Heart right ventricle (tissue), 16 donors: ENCODE measurements at regions of chr5 and their contacts with region 1.

Region 1: DNA sequence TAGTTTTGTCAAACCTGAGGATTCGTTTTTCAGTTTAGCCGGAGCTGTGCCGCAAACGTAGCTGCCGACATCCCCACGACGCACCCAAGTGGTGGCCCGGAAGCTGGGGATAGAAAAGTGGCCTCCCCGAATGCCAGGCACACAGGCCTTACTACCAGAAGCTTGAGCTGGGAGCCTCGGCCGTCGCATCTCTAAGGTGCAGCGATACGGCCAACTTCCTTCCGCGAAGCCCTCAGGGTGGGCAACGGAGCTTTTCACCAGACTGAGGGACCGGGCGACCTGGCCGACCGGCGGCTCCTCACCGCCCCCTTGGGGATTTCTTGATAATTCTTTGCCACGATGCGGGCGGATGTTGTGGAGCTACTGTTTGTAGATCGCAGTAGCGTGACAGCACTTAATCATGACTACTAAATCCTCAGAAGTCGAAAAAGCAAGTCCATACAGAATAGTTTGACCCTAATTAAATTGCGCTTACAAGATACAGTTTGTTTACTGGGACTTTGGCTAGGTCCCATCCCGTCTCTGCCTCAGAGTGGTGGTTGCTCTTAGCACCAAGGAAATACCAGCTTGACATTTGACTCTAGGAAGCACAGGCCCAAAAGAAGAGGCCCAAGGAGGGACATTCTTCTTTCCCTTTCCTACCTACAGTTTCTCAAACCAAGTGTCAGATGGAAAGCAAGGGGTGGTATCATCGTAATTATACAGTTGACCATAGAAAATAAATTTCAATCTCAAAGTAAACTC is 613 bp upstream of the TMEM267 start:
- DNase-seq: peak; percentile 75 to 86
- ATAC-seq: peak; percentile 74 to 92 (median 84)
- H3K4me3 ChIP-seq: peak overlapping the region; percentile 65 to 100 (median 79)
- H3K27ac ChIP-seq: peak overlapping the region; percentile 94 to 99 (median 97)
- H3K4me1 ChIP-seq: peaks cover 0 to 29% (median 15%) of the 10 kb centered on the region in 9 donors
- H3K27me3 ChIP-seq: no peaks in the 10 kb centered on the region
- CTCF ChIP-seq: peak; percentile 51 to 84 (median 70)

Region 2: DNA sequence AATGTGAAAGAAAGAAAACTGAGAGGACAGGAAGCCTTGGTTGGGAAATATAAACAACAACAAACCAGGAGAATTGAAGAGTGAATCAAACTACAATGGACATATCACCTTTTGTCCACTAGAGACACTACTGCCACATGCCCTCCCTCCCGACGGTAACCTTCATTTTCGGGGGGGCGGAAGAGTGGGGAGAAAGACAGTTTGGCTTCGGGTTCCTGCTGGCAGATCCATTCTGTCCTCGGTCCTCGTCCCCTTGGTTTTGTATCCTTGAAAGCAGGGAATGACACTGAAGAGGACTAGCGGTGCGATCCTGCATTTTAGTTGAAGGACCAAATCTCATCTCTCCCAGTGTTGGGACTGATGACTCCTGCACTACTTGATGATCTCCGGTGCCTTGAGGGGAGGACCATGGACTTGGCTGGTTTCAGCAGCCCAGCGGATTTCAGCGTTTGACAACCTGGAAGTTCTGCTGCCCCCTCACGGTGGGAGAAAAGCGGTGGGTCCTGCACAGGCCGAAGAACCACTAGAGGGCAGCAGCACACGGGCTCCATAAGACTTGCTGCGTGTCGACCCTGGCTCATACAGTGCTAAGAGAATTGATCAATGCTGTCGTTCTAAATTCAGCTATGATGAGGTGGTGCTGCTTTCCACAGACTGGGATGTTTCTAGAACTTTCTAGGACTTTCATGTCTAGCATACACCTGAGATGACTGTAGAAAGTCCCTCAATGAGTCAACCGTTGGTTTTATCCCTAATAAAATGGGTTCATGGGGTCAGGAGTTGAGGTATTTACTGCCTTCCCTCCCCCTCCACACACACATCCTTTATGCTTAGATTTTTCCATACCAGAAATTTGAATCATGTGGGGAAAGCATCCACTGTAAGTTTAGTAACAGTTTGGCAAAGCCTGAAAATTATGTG is 378.6 kb before region 1 on chr5:
- intact Hi-C with region 1: loop called in 1 of 10 experiments (anchors 10 kb)
- DNase-seq: peak; percentile 87 to 90
- ATAC-seq: peak; percentile 90 to 97 (median 95)
- H3K4me3 ChIP-seq: peak overlapping the region in 9 of 10 donors; percentile 26 to 58 (median 48)
- H3K27ac ChIP-seq: peak overlapping the region in 9 of 10 donors; percentile 42 to 76 (median 53)
- H3K4me1 ChIP-seq: peaks cover 0 to 10% (median 5%) of the 10 kb centered on the region in 9 donors
- H3K27me3 ChIP-seq: no peaks in the 10 kb centered on the region
- CTCF ChIP-seq: peak; percentile 97 to 100 (median 100)

Region 3: GRCh38 chr5:43313035-43313853 is 171.0 kb before region 1 on chr5 and contains the start of gene HMGCS1:
- intact Hi-C with region 1: loop called in 6 of 10 experiments (anchors 5 to 10 kb)
- DNase-seq: peak; percentile 97 to 99
- ATAC-seq: peak; percentile 97 to 100 (median 99)
- H3K4me3 ChIP-seq: peak within 1 kb of the TSS; percentile 69 to 99 (median 92)
- H3K27ac ChIP-seq: peak within 1 kb of the TSS; percentile 75 to 97 (median 90)
- H3K4me1 ChIP-seq: peaks cover 0 to 47% (median 27%) of the 10 kb centered on the region in 9 donors
- H3K27me3 ChIP-seq: no peaks in the 10 kb centered on the region
- CTCF ChIP-seq: no peak
- total RNA-seq, gene HMGCS1: 24.8 to 33.0 (median 27.1) TPM

Region 4: GRCh38 chr5:43453606-43454005 is 30.7 kb before region 1 on chr5:
- intact Hi-C with region 1: loop called in 1 of 10 experiments (anchors 1 kb)
- DNase-seq: no peak
- ATAC-seq: no peak
- H3K4me3 ChIP-seq: no peak overlapping the region
- H3K27ac ChIP-seq: no peak overlapping the region
- H3K4me1 ChIP-seq: no peaks in the 10 kb centered on the region
- H3K27me3 ChIP-seq: no peaks in the 10 kb centered on the region
- CTCF ChIP-seq: no peak

Region 5: GRCh38 chr5:43514816-43515677 is 30.8 kb after region 1 on chr5 and contains the start of gene C5orf34:
- intact Hi-C with region 1: loop called in 3 of 10 experiments (anchors 1 to 2 kb)
- DNase-seq: peak; percentile 97
- ATAC-seq: peak; percentile 99 to 100 (median 100)
- H3K4me3 ChIP-seq: peak within 1 kb of the TSS; percentile 43 to 81 (median 65)
- H3K27ac ChIP-seq: peak within 1 kb of the TSS; percentile 52 to 91 (median 88)
- H3K4me1 ChIP-seq: peaks cover 0 to 21% (median 16%) of the 10 kb centered on the region in 9 donors
- H3K27me3 ChIP-seq: no peaks in the 10 kb centered on the region
- CTCF ChIP-seq: peak in 2 of 9 donors; percentile 4 to 21
- total RNA-seq, gene C5orf34: 0.22 to 1.6 (median 0.53) TPM

Region 6: DNA sequence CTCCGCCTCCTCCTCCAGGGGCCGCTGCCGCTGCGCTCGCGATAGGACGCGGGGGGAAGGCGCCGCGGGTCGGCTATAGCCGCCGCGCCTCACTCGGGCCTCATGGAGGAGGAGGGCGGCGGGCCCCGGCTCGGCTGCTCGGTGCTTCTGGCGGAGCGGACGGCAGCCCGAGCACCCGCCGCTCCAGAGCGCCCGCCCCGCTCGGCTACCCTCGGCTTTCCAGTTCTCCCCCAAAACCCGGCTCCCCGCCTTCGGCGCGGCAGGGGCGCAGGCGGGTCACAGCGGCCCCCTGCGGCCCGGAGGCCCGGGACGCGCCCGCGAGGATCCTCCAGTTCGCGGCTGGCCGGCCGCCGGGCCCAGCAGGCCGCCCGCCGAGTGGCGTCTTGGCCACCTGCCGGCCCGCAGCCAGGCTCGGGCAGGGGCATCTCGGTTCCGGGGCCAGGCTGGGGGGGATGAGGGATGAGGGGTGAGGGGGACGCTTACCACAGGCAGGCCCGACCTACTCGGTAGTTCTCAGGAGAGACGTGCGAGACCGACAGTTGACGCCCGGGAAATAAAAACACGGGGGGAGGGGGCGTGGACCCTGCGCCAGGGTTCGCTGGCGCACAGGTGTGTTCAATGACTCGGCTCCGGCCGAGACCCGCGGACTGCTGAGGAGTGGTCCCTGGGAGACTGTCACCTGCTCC is 72.7 kb after region 1 on chr5 and contains the start of gene PAIP1:
- intact Hi-C with region 1: loop called in 3 of 10 experiments (anchors 1 to 5 kb)
- DNase-seq: peak; percentile 85 to 87
- ATAC-seq: peak; percentile 81 to 94 (median 91)
- H3K4me3 ChIP-seq: peak within 1 kb of the TSS; percentile 70 to 94 (median 84)
- H3K27ac ChIP-seq: peak within 1 kb of the TSS; percentile 93 to 99 (median 98)
- H3K4me1 ChIP-seq: peaks cover 0 to 48% (median 40%) of the 10 kb centered on the region in 9 donors
- H3K27me3 ChIP-seq: no peaks in the 10 kb centered on the region
- CTCF ChIP-seq: peak; percentile 50 to 91 (median 70)
- total RNA-seq, gene PAIP1: 112 to 162 (median 138) TPM

Region 7: GRCh38 chr5:43602461-43603343 is 118.4 kb after region 1 on chr5 and contains the start of gene NNT:
- intact Hi-C with region 1: loop called in 1 of 10 experiments (anchors 5 kb)
- DNase-seq: peak; percentile 77 to 84
- ATAC-seq: peak; percentile 78 to 90 (median 84)
- H3K4me3 ChIP-seq: peak within 1 kb of the TSS; percentile 50 to 93 (median 74)
- H3K27ac ChIP-seq: peak within 1 kb of the TSS; percentile 93 to 99 (median 96)
- H3K4me1 ChIP-seq: peaks cover 0 to 61% (median 37%) of the 10 kb centered on the region in 9 donors
- H3K27me3 ChIP-seq: no peaks in the 10 kb centered on the region
- CTCF ChIP-seq: no peak
- total RNA-seq, gene NNT: 383 to 731 (median 639) TPM